ENCODE measurements at regions of chr6 and their contacts with region 1.

Region 1: DNA sequence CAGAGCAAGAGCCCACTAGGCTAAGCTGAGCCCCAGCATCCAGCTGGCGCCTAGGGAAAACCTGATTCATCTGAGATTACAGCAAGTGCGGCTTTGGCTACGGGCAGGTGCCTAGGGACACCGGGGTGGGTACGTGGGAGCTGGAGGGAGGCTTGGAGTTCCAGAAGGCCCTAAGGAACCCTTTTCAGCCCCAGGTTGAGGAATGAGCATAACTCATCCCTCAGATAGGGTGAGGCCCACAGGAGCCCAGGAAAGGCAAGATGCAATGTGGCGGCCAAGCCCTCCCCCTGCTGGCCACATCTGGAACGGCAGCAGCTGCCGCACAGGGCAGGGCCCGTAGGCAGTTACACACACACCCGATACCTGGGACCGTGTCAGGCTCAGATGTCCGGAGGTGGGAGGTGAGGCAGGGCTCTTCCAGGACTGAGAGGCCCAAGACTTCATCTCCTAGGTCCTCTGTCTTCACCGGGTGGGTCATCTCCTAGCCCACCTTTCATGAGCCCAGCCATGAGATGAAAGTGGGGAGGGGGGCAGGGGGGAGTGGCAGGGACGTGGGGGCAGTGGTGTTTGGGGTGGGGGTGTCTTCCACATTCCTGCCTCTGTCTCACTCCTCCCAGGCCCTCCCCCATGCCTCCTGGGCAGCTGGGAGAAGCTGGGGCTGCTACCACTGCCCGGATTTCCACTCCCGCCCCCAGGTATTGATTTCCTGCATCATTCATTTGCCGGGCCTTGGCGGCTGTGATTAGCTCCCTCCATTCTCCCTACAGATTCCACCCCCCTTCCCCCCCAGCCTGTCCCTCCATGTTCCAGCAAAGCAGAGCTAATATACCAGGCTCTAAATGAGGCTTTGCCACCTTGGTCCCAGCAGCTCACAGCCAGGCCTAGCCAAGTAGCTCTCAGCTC is 5.5 kb downstream of the MDGA1 start:
- DNase-seq: peak; percentile 73 to 84
- ATAC-seq: peak; percentile 85 to 93 (median 92)
- H3K4me3 ChIP-seq: no peak overlapping the region
- H3K27ac ChIP-seq: no peak overlapping the region
- H3K4me1 ChIP-seq: peaks cover 13% of the 10 kb centered on the region
- H3K27me3 ChIP-seq: peaks cover 0 to 44% (median 7%) of the 10 kb centered on the region in 3 donors
- CTCF ChIP-seq: peak; percentile 98

Region 2: DNA sequence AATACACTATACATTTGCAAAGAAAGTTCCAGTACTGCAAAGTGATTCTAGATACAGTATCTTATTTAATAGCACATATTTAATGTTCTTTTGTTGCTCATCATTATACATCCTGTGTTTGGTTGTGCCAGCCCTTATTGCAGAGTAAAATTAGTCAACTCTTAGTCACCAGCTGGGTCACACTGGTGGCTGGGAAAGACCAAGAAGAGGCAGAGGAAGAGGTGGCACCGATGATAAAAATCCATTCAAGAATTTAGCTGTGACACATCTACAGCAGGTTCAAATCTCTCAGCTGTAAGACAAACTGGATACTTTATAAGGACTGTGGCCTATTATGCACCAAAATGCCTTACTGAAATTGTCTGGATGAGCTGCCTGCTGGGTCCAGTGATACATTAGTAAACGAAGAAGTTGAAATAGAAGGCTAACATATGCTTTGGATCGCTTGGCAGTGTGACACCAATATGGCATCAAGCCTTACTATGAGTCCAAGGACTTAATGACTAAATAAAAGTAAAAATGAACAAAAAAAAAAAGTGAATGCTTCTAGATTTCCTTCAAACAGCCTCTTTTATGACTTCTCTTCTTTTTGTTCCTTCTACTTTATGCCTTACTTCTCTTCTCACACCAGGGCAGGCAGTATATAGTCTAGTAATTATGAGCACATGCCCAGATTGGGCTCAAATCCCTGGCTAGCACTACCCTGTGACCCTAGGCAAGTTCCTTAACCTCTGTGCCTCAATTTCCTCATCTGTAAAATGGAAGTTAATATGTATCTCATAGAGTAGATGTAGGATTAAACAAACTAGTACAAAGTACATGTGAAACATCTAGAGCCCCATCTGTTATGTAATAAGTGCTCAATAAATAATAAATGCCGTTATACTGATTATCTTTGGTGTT is 367.8 kb before region 1 on chr6:
- intact Hi-C with region 1: loop called (anchors 5 kb)
- DNase-seq: no peak
- ATAC-seq: peak; percentile 29 to 52 (median 43)
- H3K4me3 ChIP-seq: no peak overlapping the region
- H3K27ac ChIP-seq: peak overlapping the region; percentile 38
- H3K4me1 ChIP-seq: peaks cover 5% of the 10 kb centered on the region
- H3K27me3 ChIP-seq: no peaks in the 10 kb centered on the region
- CTCF ChIP-seq: no peak

Region 3: GRCh38 chr6:37381579-37381978 is 310.6 kb before region 1 on chr6:
- intact Hi-C with region 1: loop called in 1 of 2 experiments (anchors 10 kb)
- DNase-seq: no peak
- ATAC-seq: peak; percentile 74 to 90 (median 87)
- H3K4me3 ChIP-seq: no peak overlapping the region
- H3K27ac ChIP-seq: no peak overlapping the region
- H3K4me1 ChIP-seq: no peaks in the 10 kb centered on the region
- H3K27me3 ChIP-seq: no peaks in the 10 kb centered on the region
- CTCF ChIP-seq: peak; percentile 60

Region 4: GRCh38 chr6:37483917-37484785 is 208.0 kb before region 1 on chr6:
- intact Hi-C with region 1: loop called (anchors 1 to 5 kb)
- DNase-seq: peak; percentile 46 to 81
- ATAC-seq: peak; percentile 76 to 88 (median 80)
- H3K4me3 ChIP-seq: no peak overlapping the region
- H3K27ac ChIP-seq: no peak overlapping the region
- H3K4me1 ChIP-seq: no peaks in the 10 kb centered on the region
- H3K27me3 ChIP-seq: no peaks in the 10 kb centered on the region
- CTCF ChIP-seq: peak; percentile 71

Region 5: DNA sequence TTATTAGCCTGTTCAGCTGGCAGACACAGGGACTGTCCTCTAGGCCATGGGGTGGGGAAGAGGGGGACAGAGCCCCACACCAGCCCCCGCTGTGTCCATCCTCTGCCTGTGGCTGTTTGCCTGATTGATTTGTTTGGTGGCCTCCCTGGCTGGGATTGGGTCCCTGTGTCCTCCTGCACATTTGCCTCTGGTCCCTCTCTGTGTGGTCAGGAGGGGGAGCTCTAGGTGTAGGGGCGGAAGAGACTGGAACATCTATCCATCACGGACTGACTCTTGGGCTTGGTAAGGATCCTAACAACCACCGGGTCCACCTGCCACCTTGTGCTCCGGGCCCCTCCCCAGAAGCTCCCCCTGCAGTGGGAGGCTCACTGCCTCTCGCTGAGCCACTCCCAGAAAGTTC is 154.0 kb before region 1 on chr6:
- intact Hi-C with region 1: loop called in 1 of 2 experiments (anchors 2 kb)
- DNase-seq: no peak
- ATAC-seq: no peak
- H3K4me3 ChIP-seq: no peak overlapping the region
- H3K27ac ChIP-seq: no peak overlapping the region
- H3K4me1 ChIP-seq: peaks cover 7% of the 10 kb centered on the region
- H3K27me3 ChIP-seq: peaks cover 0 to 36% (median 9%) of the 10 kb centered on the region in 3 donors
- CTCF ChIP-seq: peak; percentile 15

Region 6: DNA sequence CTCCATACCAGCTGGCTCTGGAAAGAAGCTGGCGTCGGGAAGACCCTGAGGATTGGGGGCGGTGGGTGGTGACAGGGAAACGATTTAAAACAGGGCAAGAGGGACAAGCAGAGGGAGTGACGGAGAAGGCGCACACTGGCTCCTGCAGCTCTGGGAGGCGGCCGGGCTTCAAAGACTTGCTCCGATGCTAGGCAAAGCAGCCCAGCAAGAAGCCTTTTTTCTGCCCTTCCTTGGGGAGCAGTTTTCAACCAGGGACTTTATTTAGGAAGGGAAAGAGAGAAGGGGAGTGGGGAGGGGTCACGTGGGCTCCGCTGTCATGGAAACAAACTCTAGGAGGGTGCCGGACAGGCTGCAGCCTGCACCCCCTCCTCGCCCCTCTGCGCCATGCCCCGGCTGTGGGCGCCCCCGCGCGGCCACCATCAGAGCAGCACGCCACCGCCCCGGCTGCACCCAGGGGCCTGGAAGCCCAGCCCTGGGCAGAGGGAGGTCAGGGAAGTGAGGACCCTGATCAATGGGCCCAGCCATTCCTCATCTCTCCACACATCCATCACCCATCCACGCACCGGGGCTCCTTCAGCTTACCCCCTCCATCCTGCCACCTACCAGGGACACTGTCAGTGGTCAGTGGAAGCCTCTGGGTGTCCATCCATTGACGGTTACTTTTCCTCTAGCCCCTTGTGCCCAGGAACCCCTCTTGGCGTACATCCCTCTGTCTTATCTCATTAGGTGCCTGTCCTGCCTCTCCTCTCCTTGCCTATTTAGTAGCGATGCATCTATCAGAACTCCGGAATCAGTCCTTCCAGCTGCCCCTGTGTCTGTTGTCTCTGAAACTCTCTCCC is 125.8 kb before region 1 on chr6:
- intact Hi-C with region 1: loop called in 1 of 2 experiments (anchors 2 kb)
- DNase-seq: peak; percentile 37 to 65
- ATAC-seq: peak; percentile 64 to 95 (median 80)
- H3K4me3 ChIP-seq: peak overlapping the region; percentile 40
- H3K27ac ChIP-seq: no peak overlapping the region
- H3K4me1 ChIP-seq: no peaks in the 10 kb centered on the region
- H3K27me3 ChIP-seq: peaks cover 0 to 34% (median 10%) of the 10 kb centered on the region in 3 donors
- CTCF ChIP-seq: peak; percentile 76

Region 7: GRCh38 chr6:37630281-37630799 is 61.8 kb before region 1 on chr6:
- intact Hi-C with region 1: no loop called
- DNase-seq: peak in 1 of 2 donors; percentile 37
- ATAC-seq: peak in 3 of 4 donors; percentile 66 to 77 (median 68)
- H3K4me3 ChIP-seq: no peak overlapping the region
- H3K27ac ChIP-seq: no peak overlapping the region
- H3K4me1 ChIP-seq: no peaks in the 10 kb centered on the region
- H3K27me3 ChIP-seq: peaks cover 0 to 12% (median 4%) of the 10 kb centered on the region in 3 donors
- CTCF ChIP-seq: no peak

Region 8: DNA sequence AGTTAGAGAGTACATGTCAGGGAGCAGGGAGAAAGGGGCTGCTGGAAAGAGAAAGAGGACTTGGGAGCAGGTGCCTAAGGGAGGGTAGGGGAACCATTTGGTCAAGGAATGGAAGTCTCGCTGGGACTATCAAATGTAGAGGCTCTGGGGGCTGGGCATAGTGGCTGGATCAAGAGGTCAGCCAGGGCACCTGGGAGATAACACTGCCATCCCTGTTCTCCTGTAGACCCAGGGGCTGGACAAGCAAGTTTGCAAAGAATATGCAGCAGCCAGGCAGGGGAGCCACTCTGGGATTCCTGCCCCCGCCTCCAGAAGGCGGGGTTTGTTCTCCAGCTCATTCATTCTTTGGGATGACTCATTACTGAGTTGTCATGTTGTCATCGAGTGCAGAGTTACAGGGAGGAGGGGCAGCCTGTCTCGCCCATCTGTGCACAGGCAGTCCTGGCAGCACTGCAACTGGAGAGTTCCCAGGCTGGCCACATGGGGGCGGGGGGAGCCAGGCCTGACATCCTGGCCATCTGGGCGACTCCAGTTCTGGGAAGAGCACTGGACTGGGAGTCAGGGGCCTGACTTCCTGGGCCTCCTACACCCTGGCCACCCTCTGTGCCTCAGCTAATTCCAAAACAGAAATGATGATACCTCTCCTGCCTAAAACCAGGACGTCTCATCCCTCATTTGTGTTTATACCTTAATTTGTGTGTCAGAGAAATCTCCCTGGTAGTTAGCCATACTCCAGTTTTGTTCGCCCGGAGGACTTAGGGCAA is 99.2 kb after region 1 on chr6:
- intact Hi-C with region 1: no loop called
- DNase-seq: peak; percentile 93 to 96
- ATAC-seq: peak; percentile 89 to 96 (median 93)
- H3K4me3 ChIP-seq: no peak overlapping the region
- H3K27ac ChIP-seq: peak overlapping the region; percentile 46
- H3K4me1 ChIP-seq: peaks cover 24% of the 10 kb centered on the region
- H3K27me3 ChIP-seq: no peaks in the 10 kb centered on the region
- CTCF ChIP-seq: peak; percentile 96